Breast epithelium (tissue), 4 donors: ENCODE measurements at regions of chr13 and their contacts with region 1.

Region 1: GRCh38 chr13:24293746-24294145 is 15.6 kb upstream of the C1QTNF9 start:
- DNase-seq: no peak
- H3K4me3 ChIP-seq: no peak overlapping the region
- H3K27ac ChIP-seq: no peak overlapping the region
- H3K4me1 ChIP-seq: no peaks in the 10 kb centered on the region
- H3K27me3 ChIP-seq: no peaks in the 10 kb centered on the region
- CTCF ChIP-seq: no peak
- POLR2A ChIP-seq: no peak

Region 2: DNA sequence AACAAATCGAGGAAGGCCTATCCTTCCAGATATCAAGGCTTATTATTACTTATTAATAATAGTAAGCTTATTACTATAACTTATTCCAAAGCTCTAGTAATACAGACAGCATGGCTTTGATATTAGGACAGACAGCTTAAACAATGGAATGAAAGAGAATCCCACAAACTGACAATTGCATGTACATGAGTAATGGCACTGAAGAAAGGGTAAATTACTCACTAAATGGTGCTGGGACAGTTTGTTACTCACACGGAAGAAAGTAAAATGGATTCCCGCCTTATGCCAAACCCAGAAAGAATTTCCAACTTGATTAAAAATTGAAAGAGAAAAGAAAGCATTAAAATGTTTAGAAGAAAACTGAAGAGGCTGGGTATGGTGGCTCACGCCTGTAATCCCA is 464.9 kb before region 1 on chr13:
- intact Hi-C with region 1: no loop called
- DNase-seq: no peak
- H3K4me3 ChIP-seq: no peak overlapping the region
- H3K27ac ChIP-seq: no peak overlapping the region
- H3K4me1 ChIP-seq: no peaks in the 10 kb centered on the region
- H3K27me3 ChIP-seq: no peaks in the 10 kb centered on the region
- CTCF ChIP-seq: no peak
- POLR2A ChIP-seq: no peak

Region 3: DNA sequence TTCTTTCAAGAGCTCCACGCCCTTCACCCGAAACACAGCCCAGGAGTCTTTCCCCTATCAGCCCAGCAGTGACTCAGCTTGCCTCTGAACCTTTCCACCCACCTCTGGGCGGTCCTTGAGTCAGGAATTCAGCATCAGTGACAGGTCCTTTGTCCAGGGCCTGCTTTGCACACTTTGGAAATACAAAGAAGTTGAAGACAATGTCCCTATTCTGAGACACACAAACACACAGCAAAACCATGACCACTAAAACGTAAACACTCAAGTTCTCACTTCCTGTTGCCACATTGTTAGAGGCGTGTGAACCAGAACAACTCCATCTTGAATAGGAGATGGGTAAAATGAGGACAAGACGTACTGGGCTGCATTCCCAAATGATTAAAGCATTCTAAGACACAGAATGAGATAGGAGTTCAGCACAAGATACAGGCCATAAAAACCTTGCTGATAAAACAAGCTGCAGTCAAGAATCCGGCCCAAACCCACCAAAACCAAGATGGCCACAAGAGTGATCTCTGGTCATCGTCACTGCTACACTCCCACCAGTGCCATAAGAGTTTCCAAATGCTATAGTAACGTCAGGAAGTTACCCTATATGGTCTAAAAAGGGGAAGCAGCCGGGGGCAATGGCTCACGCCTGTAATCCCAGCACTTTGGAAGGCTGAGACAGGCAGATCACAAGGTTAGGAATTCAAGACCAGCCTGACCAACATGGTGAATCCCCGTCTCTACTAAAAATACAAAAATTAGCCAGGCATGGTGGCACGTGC is 337.3 kb after region 1 on chr13:
- intact Hi-C with region 1: loop called (anchors 5 kb)
- DNase-seq: no peak
- H3K4me3 ChIP-seq: no peak overlapping the region
- H3K27ac ChIP-seq: no peak overlapping the region
- H3K4me1 ChIP-seq: no peaks in the 10 kb centered on the region
- H3K27me3 ChIP-seq: no peaks in the 10 kb centered on the region
- CTCF ChIP-seq: no peak
- POLR2A ChIP-seq: no peak